ENCODE measurements at regions of chr10 and their contacts with region 1.

Region 1: DNA sequence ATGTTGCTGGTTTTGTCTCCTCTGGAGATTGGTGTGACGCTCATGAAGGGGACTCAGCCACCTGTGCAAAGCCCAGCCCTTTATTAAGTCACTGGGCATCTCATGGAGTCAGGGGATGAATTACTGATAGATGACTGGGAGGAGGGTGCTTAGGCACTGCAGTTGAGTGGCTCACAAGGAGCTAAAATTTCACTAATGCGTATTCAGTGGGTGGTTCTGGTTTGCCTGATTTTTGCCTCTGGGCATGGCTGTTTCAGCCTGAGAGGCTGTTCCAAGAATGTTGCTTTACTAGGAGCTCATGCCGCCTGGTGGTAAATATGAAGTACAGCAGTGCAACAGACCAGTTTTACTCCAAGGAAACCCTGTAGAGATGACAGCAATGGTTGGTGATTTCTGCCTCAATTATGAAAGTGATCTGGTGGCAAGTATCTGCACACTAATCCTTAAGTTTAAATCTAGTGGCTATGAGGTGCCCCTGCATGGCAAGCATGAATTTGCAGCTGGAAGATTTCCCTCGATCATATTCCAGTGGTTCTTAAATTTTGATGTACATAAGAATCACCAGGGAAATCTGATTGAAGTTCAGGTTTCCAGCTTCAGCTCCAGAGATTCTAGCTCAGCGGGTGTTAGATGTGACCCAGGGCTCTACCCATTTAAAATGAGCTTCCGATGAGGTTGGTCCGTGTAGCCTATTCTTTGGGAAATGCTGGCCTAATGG is 19.9 kb downstream of the ACTA2 start:
- DNase-seq: peak in 5 of 10 donors; percentile 26 to 65 (median 46)
- H3K4me3 ChIP-seq: no peak overlapping the region
- H3K27ac ChIP-seq: peak overlapping the region in 51 of 59 donors; percentile 8 to 82 (median 66)
- H3K27me3 ChIP-seq: no peaks in the 10 kb centered on the region
- CTCF ChIP-seq: peak; percentile 65 to 96 (median 91)

Region 2: GRCh38 chr10:88835096-88835909 is 97.4 kb before region 1 on chr10:
- intact Hi-C with region 1: loop called (anchors 1 to 2 kb)
- DNase-seq: peak; percentile 61 to 86 (median 80)
- H3K4me3 ChIP-seq: no peak overlapping the region
- H3K27ac ChIP-seq: peak overlapping the region in 1 of 59 donors; percentile 16
- H3K27me3 ChIP-seq: no peaks in the 10 kb centered on the region
- CTCF ChIP-seq: peak; percentile 82 to 99 (median 91)

Region 3: GRCh38 chr10:88990384-88991160 is 57.9 kb after region 1 on chr10 and contains the start of gene FAS:
- intact Hi-C with region 1: loop called (anchors 2 kb)
- DNase-seq: peak in 8 of 10 donors; percentile 16 to 65 (median 40)
- H3K4me3 ChIP-seq: peak within 1 kb of the TSS; percentile 63 to 94 (median 82)
- H3K27ac ChIP-seq: peak within 1 kb of the TSS; percentile 36 to 97 (median 89)
- H3K27me3 ChIP-seq: no peaks in the 10 kb centered on the region
- CTCF ChIP-seq: peak in 4 of 56 donors; percentile 3 to 6 (median 5)
- total RNA-seq, gene FAS: 3.2 to 28.4 (median 12.1) TPM

Region 4: DNA sequence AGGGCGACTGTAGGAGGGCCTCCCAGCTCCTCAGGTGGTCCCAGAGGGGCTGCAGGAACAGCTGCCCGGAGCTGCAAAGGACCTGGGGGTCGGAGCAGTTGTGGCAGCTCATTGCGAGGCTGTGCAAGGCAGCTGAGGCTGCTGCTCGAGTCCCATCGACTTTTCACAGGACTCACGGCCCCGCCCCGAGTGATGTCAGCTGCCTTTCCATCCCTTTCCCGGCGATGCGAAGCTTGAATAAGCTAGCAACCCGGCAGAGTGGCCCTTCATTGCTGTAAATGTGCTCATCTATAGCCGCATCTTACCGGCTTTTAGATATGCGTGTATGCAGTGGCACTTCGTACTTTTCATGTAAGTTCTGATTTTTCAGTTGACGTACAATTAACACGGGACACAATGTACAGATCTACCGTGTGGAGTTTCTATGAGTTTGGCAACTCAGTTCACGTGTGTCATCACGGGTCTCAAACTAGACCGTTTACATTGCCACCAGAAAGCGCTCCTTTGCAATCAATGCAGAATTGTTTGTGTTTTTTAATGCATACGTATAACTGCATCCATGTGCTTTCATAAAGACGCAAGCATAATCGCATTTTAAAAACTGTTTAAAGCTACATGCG is 274.6 kb after region 1 on chr10 and contains the start of gene CH25H:
- intact Hi-C with region 1: loop called (anchors 2 to 5 kb)
- DNase-seq: peak; percentile 62 to 91 (median 88)
- H3K4me3 ChIP-seq: peak within 1 kb of the TSS; percentile 43 to 94 (median 69)
- H3K27ac ChIP-seq: peak within 1 kb of the TSS; percentile 4 to 91 (median 79)
- H3K27me3 ChIP-seq: no peaks in the 10 kb centered on the region
- CTCF ChIP-seq: peak in 7 of 56 donors; percentile 2 to 24 (median 16)
- total RNA-seq, gene CH25H: 0.35 to 8.8 (median 2.3) TPM

Region 5: DNA sequence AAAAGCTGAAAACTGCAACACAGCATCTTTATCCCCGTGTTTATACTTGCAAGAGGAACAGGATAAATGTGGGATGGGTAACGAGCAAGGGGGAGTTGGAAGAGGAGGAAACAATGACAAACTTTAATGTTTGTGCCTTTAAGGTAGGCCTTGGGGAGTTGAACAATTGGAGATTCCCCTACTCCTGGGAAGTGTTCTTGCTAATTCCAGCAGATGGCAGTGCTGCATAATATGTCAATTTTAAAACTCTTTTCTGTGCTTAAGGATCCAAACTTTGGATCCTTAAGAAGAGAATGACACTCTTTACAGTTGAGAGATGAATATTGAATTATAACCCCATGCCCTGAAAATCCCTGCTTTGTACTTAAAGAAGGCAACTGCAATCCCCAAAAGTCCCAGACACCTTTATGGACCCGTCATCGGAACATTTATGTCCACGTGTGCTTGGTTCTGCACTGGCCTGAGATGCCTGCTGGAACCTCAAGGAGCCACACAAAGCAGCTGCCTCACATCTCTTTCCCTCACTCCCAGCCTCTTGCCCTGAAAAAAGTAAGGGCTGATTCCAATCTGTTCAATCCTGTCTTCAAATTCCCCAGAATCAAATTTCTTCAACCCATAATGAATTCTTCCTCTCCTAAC is 493.7 kb after region 1 on chr10:
- intact Hi-C with region 1: loop called in 1 of 2 experiments (anchors 10 kb)
- DNase-seq: no peak
- H3K4me3 ChIP-seq: no peak overlapping the region
- H3K27ac ChIP-seq: no peak overlapping the region
- H3K27me3 ChIP-seq: no peaks in the 10 kb centered on the region
- CTCF ChIP-seq: peak; percentile 68 to 92 (median 82)

Measured in dorsolateral prefrontal cortex (tissue), 120 donors.